Ovary (tissue), 10 donors: ENCODE measurements at regions of chr15 and their contacts with region 1.

Region 1: DNA sequence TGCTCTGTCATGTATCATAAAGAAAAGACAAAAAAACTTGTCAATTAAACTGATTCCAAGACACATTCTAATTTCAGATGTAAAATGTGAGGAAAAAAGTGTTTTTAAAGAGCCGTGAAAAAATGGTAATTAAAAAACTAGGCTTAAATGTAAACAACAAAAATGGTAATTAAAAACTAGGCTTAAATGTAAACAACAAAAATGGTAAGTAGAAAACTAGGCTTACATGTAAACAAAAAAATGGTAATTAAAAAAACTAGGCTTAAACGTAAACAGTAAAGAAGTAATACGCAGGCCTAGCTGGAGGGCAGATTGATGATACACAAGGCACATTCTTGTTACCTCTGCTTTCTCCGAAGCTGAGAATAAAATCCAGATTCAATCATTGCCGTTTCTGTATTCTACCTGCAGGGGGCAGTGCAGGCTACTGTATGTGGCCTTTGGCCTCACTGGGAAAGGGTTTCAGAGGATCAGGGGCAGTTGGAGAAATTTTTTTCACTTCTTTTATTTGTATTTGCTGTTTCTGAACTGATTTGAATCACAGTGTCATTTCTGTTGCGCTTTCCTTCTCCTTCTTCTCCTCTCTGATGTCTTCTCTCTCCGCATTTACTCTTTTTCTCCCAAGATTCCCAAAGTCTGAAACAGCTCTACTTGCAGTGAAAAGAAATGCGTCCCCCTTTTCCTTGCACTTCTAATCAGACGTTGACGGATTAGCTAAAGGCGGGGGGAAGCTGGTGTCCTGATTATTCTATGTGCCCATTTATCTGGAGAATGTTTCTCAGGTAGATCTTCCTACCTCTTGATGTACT is 67.2 kb upstream of the MCTP2 start:
- DNase-seq: peak in 2 of 5 donors; percentile 21 to 32
- H3K4me3 ChIP-seq: no peak overlapping the region
- H3K27ac ChIP-seq: no peak overlapping the region
- H3K4me1 ChIP-seq: no peaks in the 10 kb centered on the region
- H3K27me3 ChIP-seq: no peaks in the 10 kb centered on the region
- CTCF ChIP-seq: no peak
- EP300 ChIP-seq: no peak
- POLR2A ChIP-seq: no peak

Region 2: DNA sequence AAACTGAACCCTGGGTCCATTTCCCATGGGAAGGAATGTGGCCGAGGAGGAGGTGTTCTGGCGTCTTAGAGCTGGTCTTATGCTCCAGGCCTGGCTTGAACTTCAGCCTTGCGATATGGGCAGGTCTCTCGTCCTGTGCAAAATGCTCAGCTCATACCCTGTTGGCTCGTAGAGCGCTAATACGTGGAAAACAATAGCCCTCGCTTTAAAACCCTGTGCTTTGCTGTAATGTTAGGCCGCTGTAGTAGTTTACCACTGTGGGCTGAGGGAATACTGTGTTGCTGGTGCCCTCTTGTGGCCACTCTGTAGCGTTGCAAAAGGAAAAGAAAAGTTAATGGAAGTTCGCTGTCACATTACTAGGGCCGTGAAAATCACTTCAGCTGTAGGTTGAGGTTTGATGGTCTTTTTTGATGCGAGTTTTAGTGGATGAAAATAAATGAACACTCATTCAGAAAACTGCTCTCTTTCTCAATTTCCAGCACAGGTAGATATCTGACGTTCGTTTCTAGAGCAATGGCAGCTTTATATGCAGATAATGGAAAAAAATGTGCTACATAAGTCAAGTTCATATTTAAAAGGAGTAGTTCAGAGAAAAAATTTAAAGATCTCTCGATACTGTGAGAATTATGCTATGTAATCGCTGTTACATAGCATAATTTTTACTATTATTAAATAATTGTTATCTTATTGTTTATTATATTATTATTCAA is 160.1 kb after region 1 on chr15:
- intact Hi-C with region 1: loop called in 1 of 4 experiments (anchors 10 kb)
- DNase-seq: peak; percentile 15 to 56 (median 40)
- H3K4me3 ChIP-seq: no peak overlapping the region
- H3K27ac ChIP-seq: no peak overlapping the region
- H3K4me1 ChIP-seq: no peaks in the 10 kb centered on the region
- H3K27me3 ChIP-seq: no peaks in the 10 kb centered on the region
- CTCF ChIP-seq: peak; percentile 56 to 77 (median 71)
- EP300 ChIP-seq: no peak
- POLR2A ChIP-seq: no peak